ENCODE measurements at regions of chr1 and their contacts with region 1.

Region 1: GRCh38 chr1:181142096-181142958 is 53.8 kb downstream of the IER5 start:
- DNase-seq: peak; percentile 87
- H3K4me3 ChIP-seq: peak overlapping the region; percentile 54
- H3K27ac ChIP-seq: peak overlapping the region; percentile 17
- H3K4me1 ChIP-seq: peaks cover 47% of the 10 kb centered on the region
- H3K27me3 ChIP-seq: no peaks in the 10 kb centered on the region
- CTCF ChIP-seq: peak; percentile 97

Region 2: GRCh38 chr1:181038399-181038873 is 103.9 kb before region 1 on chr1:
- intact Hi-C with region 1: loop called (anchors 2 kb)
- DNase-seq: no peak
- H3K4me3 ChIP-seq: no peak overlapping the region
- H3K27ac ChIP-seq: no peak overlapping the region
- H3K4me1 ChIP-seq: peaks cover 41% of the 10 kb centered on the region
- H3K27me3 ChIP-seq: no peaks in the 10 kb centered on the region
- CTCF ChIP-seq: peak; percentile 82

Region 3: DNA sequence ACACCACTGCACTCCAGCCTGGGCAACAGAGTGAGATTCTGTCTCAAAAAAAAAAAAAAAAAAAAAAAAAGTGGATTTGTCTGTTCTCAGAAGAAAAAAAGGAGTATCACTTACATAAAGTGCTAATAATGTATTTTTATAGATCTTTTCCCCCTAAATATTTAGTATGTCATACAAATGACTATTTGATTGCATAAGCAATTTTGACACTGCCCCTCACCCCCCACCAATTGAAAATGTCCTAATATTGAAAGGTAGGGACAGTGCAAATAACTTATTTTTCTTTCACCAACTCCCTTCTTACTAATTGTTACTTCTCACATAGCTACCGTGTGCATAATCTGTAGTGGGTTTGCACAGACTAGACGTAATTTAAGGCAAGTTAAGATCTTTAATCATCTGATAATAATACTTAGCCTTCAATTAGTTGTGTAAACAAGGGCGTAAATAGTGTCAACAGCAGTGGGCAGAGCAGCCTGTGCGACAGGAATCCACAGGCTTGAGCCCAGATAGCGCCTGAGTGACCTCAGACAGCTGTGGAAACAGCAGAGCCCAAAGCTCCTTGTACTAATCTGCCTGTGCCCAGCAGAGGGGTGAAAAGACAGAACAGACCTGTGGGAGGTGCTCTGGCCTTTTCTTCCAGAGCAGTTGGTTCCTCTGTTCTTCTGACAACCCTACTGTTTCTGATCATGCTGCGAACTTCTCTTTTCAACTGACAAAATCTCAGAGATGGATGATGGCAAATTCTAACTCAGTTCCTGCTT is 58.3 kb before region 1 on chr1:
- intact Hi-C with region 1: loop called (anchors 5 kb)
- DNase-seq: no peak
- H3K4me3 ChIP-seq: no peak overlapping the region
- H3K27ac ChIP-seq: no peak overlapping the region
- H3K4me1 ChIP-seq: peaks cover 16% of the 10 kb centered on the region
- H3K27me3 ChIP-seq: no peaks in the 10 kb centered on the region
- CTCF ChIP-seq: peak; percentile 70

Measured in left ventricle myocardium inferior (tissue), 1 donor.